CD4-positive, alpha-beta memory T cell (primary cell): ENCODE measurements at regions of chr17 and their contacts with region 1.

Region 1: DNA sequence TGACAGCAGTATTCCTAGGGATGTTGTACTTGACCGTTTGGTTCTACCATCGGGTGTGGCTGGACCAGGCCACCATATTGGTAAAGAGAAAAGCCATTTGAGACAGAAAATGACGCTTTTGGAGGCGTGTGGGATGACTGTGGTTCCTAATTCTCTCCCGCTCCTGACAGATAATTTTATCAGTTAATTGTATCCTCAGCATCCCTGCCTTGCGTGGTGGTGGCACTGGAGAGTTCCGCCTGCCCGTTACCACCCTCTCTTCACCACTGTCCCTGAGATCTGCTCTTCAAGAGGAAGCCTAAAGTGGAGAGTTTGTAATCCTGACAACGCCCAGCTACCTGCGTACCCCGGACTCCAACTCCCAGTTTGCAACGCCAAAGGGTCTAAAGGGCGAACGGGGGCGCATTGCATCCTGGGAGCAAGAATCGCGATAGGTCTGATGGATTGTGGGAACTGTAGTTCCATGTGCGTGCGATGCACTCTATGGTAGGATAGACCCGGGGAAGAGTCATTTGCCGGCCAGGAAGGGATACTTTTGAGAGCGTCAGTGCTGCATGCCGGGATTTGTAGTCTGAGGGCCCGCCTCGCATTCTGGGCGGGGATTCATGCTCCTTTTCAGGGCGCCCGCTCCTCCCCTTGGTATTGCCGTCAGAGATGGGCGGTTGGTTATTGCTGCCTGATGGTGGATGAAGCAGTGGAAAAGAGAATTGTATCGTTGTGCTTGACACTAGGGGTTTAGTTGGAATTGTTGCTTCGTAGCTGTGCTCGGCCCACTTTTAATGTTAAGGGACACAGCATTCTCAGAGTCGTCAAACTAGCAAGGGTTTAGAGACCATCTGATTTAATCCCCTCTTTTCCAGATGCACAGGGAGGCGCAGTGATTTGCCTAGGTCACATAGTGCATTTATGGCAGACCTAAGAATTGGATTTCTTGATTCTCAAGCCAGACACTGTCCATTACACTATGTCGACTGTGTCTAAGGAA is 965 bp upstream of the PHF12 start:
- DNase-seq: peak; percentile 94 to 99 (median 99)
- H3K4me3 ChIP-seq: peak overlapping the region; percentile 86 to 92
- H3K4me3 Mint-ChIP-seq: no peak overlapping the region
- H3K27ac ChIP-seq: peak overlapping the region; percentile 86
- H3K27ac Mint-ChIP-seq: no peak overlapping the region
- H3K4me1 ChIP-seq: peaks cover 29% of the 10 kb centered on the region
- H3K4me1 Mint-ChIP-seq: peaks cover 12 to 20% (median 18%) of the 10 kb centered on the region in 4 donors
- H3K27me3 ChIP-seq: no peaks in the 10 kb centered on the region
- H3K27me3 Mint-ChIP-seq: no peaks in the 10 kb centered on the region

Region 2: DNA sequence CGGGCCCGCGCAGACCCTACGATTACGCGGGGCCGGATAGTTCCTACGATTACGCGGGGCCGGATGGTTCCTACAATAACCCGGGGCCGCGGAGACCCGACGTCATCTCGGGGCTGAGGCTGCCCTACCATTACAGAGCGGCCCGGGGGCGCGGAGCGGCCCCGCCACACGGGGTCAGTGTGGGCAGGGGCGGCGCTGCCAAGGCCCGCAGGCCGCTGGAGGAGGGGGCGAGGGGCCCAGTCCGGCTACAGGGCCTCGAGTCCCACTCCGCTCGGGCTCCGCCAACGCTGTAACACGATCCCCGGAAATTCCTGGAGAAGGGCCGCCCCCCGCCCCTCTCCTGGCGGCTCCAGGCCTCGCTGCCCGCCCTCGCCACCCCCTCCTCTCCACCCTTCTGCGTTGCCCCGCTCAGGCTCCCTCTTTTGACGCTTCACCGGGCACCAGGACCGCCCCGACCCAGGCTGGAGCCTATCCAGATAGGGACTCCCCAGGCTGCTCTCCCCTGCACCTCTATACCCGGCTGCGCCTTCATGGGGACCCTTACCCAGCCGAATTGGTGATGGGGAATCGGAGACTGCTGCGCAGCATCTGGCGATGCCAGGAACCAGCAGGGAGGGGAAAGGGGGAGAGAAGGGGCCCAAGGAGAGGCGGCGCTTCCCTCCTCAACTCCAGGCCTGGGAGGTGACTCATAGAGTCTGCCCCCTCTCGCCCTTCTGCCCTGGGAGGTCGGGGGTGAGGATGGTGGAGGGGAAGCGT is 234.5 kb before region 1 on chr17 and contains the start of gene RAB34:
- CTCF ChIA-PET with region 1: interaction called, 15 read pairs
- POLR2A ChIA-PET with region 1: interaction called, 118 read pairs
- intact Hi-C with region 1: loop called (anchors 1 kb)
- DNase-seq: no peak
- H3K4me3 ChIP-seq: no peak within 1 kb of the TSS
- H3K4me3 Mint-ChIP-seq: peak within 1 kb of the TSS; percentile 49 to 71 (median 53)
- H3K27ac ChIP-seq: no peak within 1 kb of the TSS
- H3K27ac Mint-ChIP-seq: peak within 1 kb of the TSS in 5 of 7 donors; percentile 52 to 96 (median 74)
- H3K4me1 ChIP-seq: peaks cover 38% of the 10 kb centered on the region
- H3K4me1 Mint-ChIP-seq: peaks cover 24 to 46% (median 35%) of the 10 kb centered on the region in 4 donors
- H3K27me3 ChIP-seq: peaks cover 11% of the 10 kb centered on the region
- H3K27me3 Mint-ChIP-seq: peaks cover 9 to 18% of the 10 kb centered on the region in 2 donors
- total RNA-seq, gene RAB34: 4.0 to 6.3 TPM

Region 3: GRCh38 chr17:28763804-28764266 is 188.4 kb before region 1 on chr17:
- CTCF ChIA-PET with region 1: interaction called, 75 read pairs
- POLR2A ChIA-PET with region 1: interaction called, 12 read pairs
- intact Hi-C with region 1: loop called (anchors 1 kb)
- DNase-seq: peak; percentile 71 to 82 (median 77)
- H3K4me3 ChIP-seq: no peak overlapping the region
- H3K4me3 Mint-ChIP-seq: no peak overlapping the region
- H3K27ac ChIP-seq: no peak overlapping the region
- H3K27ac Mint-ChIP-seq: peak overlapping the region in 5 of 7 donors; percentile 77 to 84 (median 82)
- H3K4me1 ChIP-seq: no peaks in the 10 kb centered on the region
- H3K4me1 Mint-ChIP-seq: peaks cover 3 to 8% (median 4%) of the 10 kb centered on the region in 4 donors
- H3K27me3 ChIP-seq: no peaks in the 10 kb centered on the region
- H3K27me3 Mint-ChIP-seq: no peaks in the 10 kb centered on the region

Region 4: GRCh38 chr17:28889996-28890395 is 62.3 kb before region 1 on chr17:
- CTCF ChIA-PET with region 1: interaction called, 8 read pairs
- POLR2A ChIA-PET with region 1: interaction called, 40 read pairs
- intact Hi-C with region 1: no loop called
- DNase-seq: no peak
- H3K4me3 ChIP-seq: no peak overlapping the region
- H3K4me3 Mint-ChIP-seq: no peak overlapping the region
- H3K27ac ChIP-seq: no peak overlapping the region
- H3K27ac Mint-ChIP-seq: peak overlapping the region in 5 of 7 donors; percentile 17 to 62 (median 36)
- H3K4me1 ChIP-seq: peaks cover 42% of the 10 kb centered on the region
- H3K4me1 Mint-ChIP-seq: peaks cover 27 to 66% (median 43%) of the 10 kb centered on the region in 4 donors
- H3K27me3 ChIP-seq: no peaks in the 10 kb centered on the region
- H3K27me3 Mint-ChIP-seq: no peaks in the 10 kb centered on the region

Region 5: GRCh38 chr17:28916302-28916934 is 35.9 kb before region 1 on chr17:
- CTCF ChIA-PET with region 1: interaction called, 8 read pairs
- POLR2A ChIA-PET with region 1: interaction called, 21 read pairs
- intact Hi-C with region 1: no loop called
- DNase-seq: peak; percentile 40 to 59 (median 45)
- H3K4me3 ChIP-seq: no peak overlapping the region
- H3K4me3 Mint-ChIP-seq: no peak overlapping the region
- H3K27ac ChIP-seq: no peak overlapping the region
- H3K27ac Mint-ChIP-seq: peak overlapping the region in 6 of 7 donors; percentile 70 to 91 (median 82)
- H3K4me1 ChIP-seq: no peaks in the 10 kb centered on the region
- H3K4me1 Mint-ChIP-seq: peaks cover 0 to 6% (median 4%) of the 10 kb centered on the region in 4 donors
- H3K27me3 ChIP-seq: no peaks in the 10 kb centered on the region
- H3K27me3 Mint-ChIP-seq: no peaks in the 10 kb centered on the region

Region 6: GRCh38 chr17:29140051-29140621 is 187.9 kb after region 1 on chr17:
- CTCF ChIA-PET with region 1: interaction called, 5 read pairs
- POLR2A ChIA-PET with region 1: interaction called, 21 read pairs
- intact Hi-C with region 1: loop called (anchors 1 kb)
- DNase-seq: peak; percentile 65 to 92 (median 69)
- H3K4me3 ChIP-seq: peak overlapping the region; percentile 55 to 72
- H3K4me3 Mint-ChIP-seq: peak overlapping the region; percentile 90 to 98 (median 92)
- H3K27ac ChIP-seq: peak overlapping the region; percentile 81
- H3K27ac Mint-ChIP-seq: peak overlapping the region; percentile 91 to 99 (median 97)
- H3K4me1 ChIP-seq: peaks cover 69% of the 10 kb centered on the region
- H3K4me1 Mint-ChIP-seq: peaks cover 49 to 82% (median 63%) of the 10 kb centered on the region in 4 donors
- H3K27me3 ChIP-seq: no peaks in the 10 kb centered on the region
- H3K27me3 Mint-ChIP-seq: no peaks in the 10 kb centered on the region